ENCODE measurements at regions of chr1 and their contacts with region 1.

Region 1: GRCh38 chr1:160291248-160292220 is 6.6 kb upstream of the PEX19 start:
- DNase-seq: peak; percentile 42 to 66
- ATAC-seq: peak; percentile 85 to 92 (median 90)
- H3K4me3 ChIP-seq: no peak overlapping the region
- H3K27ac ChIP-seq: peak overlapping the region; percentile 26
- H3K4me1 ChIP-seq: no peaks in the 10 kb centered on the region
- H3K27me3 ChIP-seq: no peaks in the 10 kb centered on the region
- CTCF ChIP-seq: peak; percentile 80

Region 2: GRCh38 chr1:160085686-160086455 is 205.7 kb before region 1 on chr1:
- intact Hi-C with region 1: loop called in 1 of 2 experiments (anchors 5 kb)
- DNase-seq: peak; percentile 84 to 91
- ATAC-seq: peak; percentile 79 to 92 (median 82)
- H3K4me3 ChIP-seq: no peak overlapping the region
- H3K27ac ChIP-seq: peak overlapping the region; percentile 27
- H3K4me1 ChIP-seq: no peaks in the 10 kb centered on the region
- H3K27me3 ChIP-seq: peaks cover 0 to 21% (median 0%) of the 10 kb centered on the region in 3 donors
- CTCF ChIP-seq: peak; percentile 88

Region 3: GRCh38 chr1:160098852-160099561 is 192.5 kb before region 1 on chr1:
- intact Hi-C with region 1: loop called in 1 of 2 experiments (anchors 2 kb)
- DNase-seq: peak; percentile 98 to 99
- ATAC-seq: peak; percentile 78 to 86 (median 79)
- H3K4me3 ChIP-seq: peak overlapping the region; percentile 89
- H3K27ac ChIP-seq: peak overlapping the region; percentile 87
- H3K4me1 ChIP-seq: peaks cover 41% of the 10 kb centered on the region
- H3K27me3 ChIP-seq: no peaks in the 10 kb centered on the region
- CTCF ChIP-seq: no peak

Region 4: GRCh38 chr1:160193091-160193819 is 98.3 kb before region 1 on chr1:
- intact Hi-C with region 1: loop called (anchors 1 to 2 kb)
- DNase-seq: peak; percentile 86 to 94
- ATAC-seq: peak; percentile 74 to 85 (median 81)
- H3K4me3 ChIP-seq: peak overlapping the region; percentile 75
- H3K27ac ChIP-seq: peak overlapping the region; percentile 88
- H3K4me1 ChIP-seq: peaks cover 41% of the 10 kb centered on the region
- H3K27me3 ChIP-seq: no peaks in the 10 kb centered on the region
- CTCF ChIP-seq: peak; percentile 97

Region 5: GRCh38 chr1:160244209-160244608 is 47.3 kb before region 1 on chr1:
- intact Hi-C with region 1: loop called in 1 of 2 experiments (anchors 5 kb)
- DNase-seq: no peak
- ATAC-seq: peak; percentile 41 to 77 (median 59)
- H3K4me3 ChIP-seq: peak overlapping the region; percentile 11
- H3K27ac ChIP-seq: peak overlapping the region; percentile 62
- H3K4me1 ChIP-seq: peaks cover 59% of the 10 kb centered on the region
- H3K27me3 ChIP-seq: no peaks in the 10 kb centered on the region
- CTCF ChIP-seq: no peak

Region 6: GRCh38 chr1:160330129-160330528 is 38.6 kb after region 1 on chr1:
- intact Hi-C with region 1: loop called (anchors 5 kb)
- DNase-seq: no peak
- ATAC-seq: no peak
- H3K4me3 ChIP-seq: no peak overlapping the region
- H3K27ac ChIP-seq: no peak overlapping the region
- H3K4me1 ChIP-seq: no peaks in the 10 kb centered on the region
- H3K27me3 ChIP-seq: no peaks in the 10 kb centered on the region
- CTCF ChIP-seq: no peak

Region 7: DNA sequence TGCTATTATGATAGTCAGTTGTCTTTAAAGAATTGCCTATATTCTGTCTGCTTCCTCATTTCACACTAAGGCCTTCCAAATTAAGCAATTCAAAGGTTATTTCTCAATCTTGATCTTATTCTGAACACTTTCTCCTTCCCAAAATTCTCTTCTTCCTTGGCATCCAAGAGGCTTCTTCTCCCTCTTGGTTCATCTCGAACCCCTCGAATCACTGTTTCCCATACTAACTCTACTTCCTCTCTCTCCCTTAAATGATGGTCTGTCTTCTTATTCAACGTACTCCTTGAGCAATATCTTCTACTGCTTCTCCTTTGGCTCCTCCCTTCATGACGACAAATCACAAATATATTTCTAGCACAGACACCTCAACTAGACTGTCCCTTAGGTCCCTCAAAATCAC is 47.0 kb after region 1 on chr1:
- intact Hi-C with region 1: loop called (anchors 5 kb)
- DNase-seq: no peak
- ATAC-seq: no peak
- H3K4me3 ChIP-seq: no peak overlapping the region
- H3K27ac ChIP-seq: no peak overlapping the region
- H3K4me1 ChIP-seq: peaks cover 26% of the 10 kb centered on the region
- H3K27me3 ChIP-seq: no peaks in the 10 kb centered on the region
- CTCF ChIP-seq: no peak

Region 8: GRCh38 chr1:160366731-160367515 is 75.4 kb after region 1 on chr1 and contains the start of gene NHLH1:
- intact Hi-C with region 1: no loop called
- DNase-seq: no peak
- ATAC-seq: peak in 2 of 4 donors; percentile 23 to 26
- H3K4me3 ChIP-seq: no peak within 1 kb of the TSS
- H3K27ac ChIP-seq: no peak within 1 kb of the TSS
- H3K4me1 ChIP-seq: no peaks in the 10 kb centered on the region
- H3K27me3 ChIP-seq: no peaks in the 10 kb centered on the region
- CTCF ChIP-seq: no peak
- total RNA-seq, gene NHLH1: 0.13 to 0.20 TPM in 2 of 4 donors, not detected in the others